H1 (cell line): ENCODE measurements at regions of chr2 and their contacts with region 1.

Region 1: DNA sequence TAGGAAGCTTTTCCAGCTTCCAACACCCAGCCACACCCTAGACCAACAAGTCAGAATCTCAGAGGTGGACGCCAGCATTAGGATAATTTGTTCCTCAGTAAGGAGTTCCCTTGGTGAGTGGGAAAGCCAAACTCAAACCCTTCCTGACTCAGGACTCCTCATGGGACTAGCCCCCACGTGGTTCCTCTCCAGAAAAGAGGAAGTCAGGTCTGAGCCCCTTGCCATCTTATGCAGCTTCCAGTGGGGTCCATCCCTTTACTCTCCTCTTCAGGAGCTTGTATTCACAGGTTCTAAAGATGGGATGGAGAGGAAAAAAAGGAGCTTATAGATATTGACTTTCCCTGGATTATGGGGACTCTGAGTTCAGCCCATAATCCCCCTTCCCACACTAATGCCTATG is 14.8 kb upstream of the NOTO start:
- DNase-seq: no peak
- H3K4me3 ChIP-seq: no peak overlapping the region
- H3K27ac ChIP-seq: no peak overlapping the region
- H3K4me1 ChIP-seq: peaks cover 0 to 9% (median 2%) of the 10 kb centered on the region in 4 experiments; a peak in 4 of 7 replicates
- H3K27me3 ChIP-seq: peaks cover 0 to 5% (median 0%) of the 10 kb centered on the region in 4 experiments; a peak in 1 of 7 replicates
- CTCF ChIP-seq: no peak
- EP300 ChIP-seq: no peak
- POLR2A ChIP-seq: no peak
- RAD21 ChIP-seq: no peak

Region 2: DNA sequence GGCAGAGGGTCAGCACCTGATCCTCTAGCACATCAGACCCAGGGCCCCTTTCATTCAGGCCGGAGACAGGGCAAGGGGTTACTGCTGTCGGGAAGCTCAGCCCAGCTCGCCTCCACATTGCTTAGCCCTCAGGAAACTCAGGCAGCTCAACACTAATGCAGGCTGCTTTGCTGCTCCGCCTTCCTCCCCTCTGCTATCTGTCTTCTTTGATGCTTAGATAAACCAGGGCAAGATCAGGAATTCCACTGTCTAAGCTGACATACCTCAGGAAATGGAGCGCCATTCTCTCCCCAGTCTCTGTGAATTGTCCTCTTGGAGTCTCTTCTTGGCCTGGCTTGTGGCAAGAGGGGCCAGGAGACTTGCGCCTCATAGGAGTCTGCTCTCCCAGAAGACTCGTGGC is 336.2 kb before region 1 on chr2:
- CTCF ChIA-PET with region 1: no interaction called
- POLR2A ChIA-PET with region 1: no interaction called
- DNase-seq: no peak
- H3K4me3 ChIP-seq: no peak overlapping the region
- H3K27ac ChIP-seq: no peak overlapping the region
- H3K4me1 ChIP-seq: peaks cover 0 to 4% (median 0%) of the 10 kb centered on the region in 4 experiments; a peak in 2 of 7 replicates
- H3K27me3 ChIP-seq: no peaks in the 10 kb centered on the region; a peak in 1 of 7 replicates
- CTCF ChIP-seq: no peak
- EP300 ChIP-seq: no peak
- POLR2A ChIP-seq: no peak
- RAD21 ChIP-seq: no peak

Region 3: GRCh38 chr2:73202156-73203054 is 14.9 kb after region 1 on chr2 and contains the start of gene NOTO:
- CTCF ChIA-PET with region 1: interaction called, 11 read pairs
- POLR2A ChIA-PET with region 1: interaction called, 3 read pairs
- DNase-seq: peak in 1 of 2 experiments; percentile 81
- H3K4me3 ChIP-seq: peak within 1 kb of the TSS; percentile 26 to 57 (median 42)
- H3K27ac ChIP-seq: no peak within 1 kb of the TSS
- H3K4me1 ChIP-seq: peaks cover 0 to 2% (median 0%) of the 10 kb centered on the region in 4 experiments; a peak in 2 of 7 replicates
- H3K27me3 ChIP-seq: peaks cover 14 to 34% (median 25%) of the 10 kb centered on the region in 4 experiments
- CTCF ChIP-seq: no peak
- EP300 ChIP-seq: no peak
- POLR2A ChIP-seq: no peak
- RAD21 ChIP-seq: no peak
- total RNA-seq, gene NOTO: 0.44 and 0.54 TPM in 2 replicates